Activated CD8-positive, alpha-beta T cell treated with anti-CD3 and anti-CD28 coated beads for 36 hours (primary cell): ENCODE measurements at regions of chr3 and their contacts with region 1.

Region 1: DNA sequence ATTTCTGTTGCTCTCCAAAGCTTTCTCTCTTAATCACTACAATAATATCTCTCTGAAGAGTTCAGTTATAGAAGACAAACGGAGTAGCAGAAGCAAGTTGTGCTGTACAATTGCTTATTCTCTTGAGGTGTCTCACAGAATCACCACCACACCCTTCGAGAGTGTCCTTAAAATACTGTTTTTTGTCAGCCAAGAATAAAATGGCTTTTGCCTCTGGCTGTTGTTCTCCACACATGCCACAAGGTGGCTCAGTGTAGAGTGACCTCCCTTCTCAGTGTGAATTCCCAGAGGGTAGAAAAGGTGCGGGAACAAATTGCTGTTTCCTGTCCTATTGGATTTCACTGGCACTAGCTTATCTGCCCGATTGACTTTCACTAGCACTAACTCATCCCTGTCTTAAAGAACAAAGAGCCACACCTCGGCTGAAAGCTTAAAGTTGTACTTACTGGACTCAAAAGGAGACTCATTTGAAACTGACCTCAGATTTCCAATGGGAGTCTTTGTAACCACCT is 134.2 kb upstream of the SATB1 start:
- DNase-seq: peak; percentile 32
- ATAC-seq: peak; percentile 37
- H3K4me3 Mint-ChIP-seq: peak overlapping the region; percentile 13
- H3K27ac Mint-ChIP-seq: peak overlapping the region; percentile 95
- H3K4me1 Mint-ChIP-seq: peaks cover 67% of the 10 kb centered on the region
- H3K27me3 Mint-ChIP-seq: no peaks in the 10 kb centered on the region
- CTCF ChIP-seq: peak; percentile 83

Region 2: DNA sequence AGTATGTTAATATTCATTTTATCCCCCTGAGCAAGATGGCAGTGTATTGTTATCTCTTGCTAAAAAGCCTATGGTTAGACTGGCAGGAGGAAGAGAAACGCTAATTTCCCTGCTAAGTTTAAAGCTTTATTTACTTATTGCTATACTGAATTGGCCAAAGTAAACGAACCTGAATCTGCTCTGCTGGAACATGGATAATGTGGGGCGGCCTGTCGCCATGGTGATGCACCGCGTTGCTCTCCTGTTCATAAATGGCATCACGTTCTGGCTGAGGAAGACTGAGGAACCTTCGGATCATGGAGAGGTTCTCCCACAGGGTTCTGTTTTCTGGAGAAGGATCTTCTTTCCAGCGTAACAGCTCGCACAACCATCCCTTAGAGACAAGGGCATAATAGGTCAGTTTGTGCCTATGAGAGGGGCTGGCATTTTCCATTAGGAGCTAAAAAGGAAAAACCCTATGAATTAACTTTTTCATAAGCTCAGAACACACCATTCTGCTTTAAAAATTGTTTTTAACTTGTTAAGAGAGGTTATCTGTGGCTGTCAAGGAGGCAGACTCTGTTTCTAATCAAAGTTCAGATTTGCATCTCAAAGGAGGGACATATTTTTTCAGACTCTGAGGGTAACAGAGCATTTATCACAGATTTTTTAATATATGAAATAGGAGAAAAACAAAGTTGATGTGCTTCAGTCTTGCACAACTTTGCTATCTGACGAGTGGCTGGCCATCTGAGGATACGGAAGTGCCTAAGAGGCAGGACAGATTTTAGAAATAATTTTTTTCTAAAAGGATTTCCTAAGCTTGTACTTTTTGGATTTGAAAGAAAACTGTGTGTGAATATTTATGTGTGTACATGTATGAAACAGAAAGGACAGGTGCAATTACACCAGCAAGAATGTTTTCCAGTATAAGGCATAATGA is 207.3 kb before region 1 on chr3:
- CTCF ChIA-PET with region 1: no interaction called
- POLR2A ChIA-PET with region 1: no interaction called
- intact Hi-C with region 1: no loop called
- DNase-seq: no peak
- ATAC-seq: no peak
- H3K4me3 Mint-ChIP-seq: no peak overlapping the region
- H3K27ac Mint-ChIP-seq: peak overlapping the region; percentile 11
- H3K4me1 Mint-ChIP-seq: peaks cover 57% of the 10 kb centered on the region
- H3K27me3 Mint-ChIP-seq: no peaks in the 10 kb centered on the region
- CTCF ChIP-seq: no peak

Region 3: DNA sequence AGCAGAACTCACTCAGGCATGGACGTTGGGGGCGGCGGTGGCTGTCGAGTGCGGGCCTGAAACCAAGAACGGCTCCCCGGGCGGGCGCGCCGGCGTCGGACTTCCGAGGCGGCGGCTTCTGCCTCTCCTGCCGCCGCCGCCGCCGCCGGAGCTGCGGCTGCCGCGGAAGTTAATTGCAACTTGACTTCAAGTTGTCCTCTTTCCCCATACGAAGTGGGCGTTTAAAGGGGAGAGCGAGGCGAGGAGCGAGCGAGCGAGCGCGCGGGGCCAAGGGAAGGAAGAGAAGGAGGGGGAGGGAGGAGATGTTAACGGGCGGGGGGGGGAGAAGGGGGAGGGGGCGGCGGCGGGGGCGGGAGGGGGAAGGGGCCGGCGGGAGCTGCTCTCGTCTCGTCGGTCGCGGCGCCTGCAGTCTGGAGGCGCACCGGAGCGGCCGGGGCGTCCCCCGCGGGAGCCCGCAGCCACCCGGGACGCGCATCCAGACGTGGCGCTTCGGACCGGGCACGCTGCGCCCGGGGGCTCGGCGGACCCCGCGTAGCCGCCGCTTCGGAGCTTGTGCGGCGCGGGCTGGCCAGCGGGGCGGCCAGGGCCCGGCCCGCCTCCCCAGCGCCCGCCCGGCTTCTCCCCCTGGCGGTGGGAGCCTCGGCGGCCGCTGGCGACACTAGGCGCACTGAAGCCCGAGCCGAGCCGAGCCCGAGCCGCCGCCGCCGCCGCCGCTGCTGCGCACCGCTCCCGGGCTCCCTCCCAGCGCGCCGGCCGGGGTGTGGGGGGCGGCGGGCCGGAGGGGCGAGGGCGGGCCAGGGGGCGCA is 114.6 kb before region 1 on chr3:
- CTCF ChIA-PET with region 1: interaction called, 10 read pairs
- POLR2A ChIA-PET with region 1: interaction called, 16 read pairs
- intact Hi-C with region 1: loop called (anchors 2 kb)
- DNase-seq: peak; percentile 83
- ATAC-seq: peak; percentile 75
- H3K4me3 Mint-ChIP-seq: peak overlapping the region; percentile 99
- H3K27ac Mint-ChIP-seq: peak overlapping the region; percentile 97
- H3K4me1 Mint-ChIP-seq: peaks cover 33% of the 10 kb centered on the region
- H3K27me3 Mint-ChIP-seq: no peaks in the 10 kb centered on the region
- CTCF ChIP-seq: no peak

Region 4: GRCh38 chr3:18649666-18650363 is 90.4 kb after region 1 on chr3:
- CTCF ChIA-PET with region 1: interaction called, 17 read pairs
- POLR2A ChIA-PET with region 1: interaction called, 12 read pairs
- intact Hi-C with region 1: loop called (anchors 5 kb)
- DNase-seq: peak; percentile 82
- ATAC-seq: peak; percentile 88
- H3K4me3 Mint-ChIP-seq: peak overlapping the region; percentile 6
- H3K27ac Mint-ChIP-seq: peak overlapping the region; percentile 94
- H3K4me1 Mint-ChIP-seq: peaks cover 72% of the 10 kb centered on the region
- H3K27me3 Mint-ChIP-seq: no peaks in the 10 kb centered on the region
- CTCF ChIP-seq: no peak

Region 5: GRCh38 chr3:18703798-18704197 is 144.4 kb after region 1 on chr3:
- CTCF ChIA-PET with region 1: interaction called, 10 read pairs
- POLR2A ChIA-PET with region 1: interaction called, 3 read pairs
- intact Hi-C with region 1: no loop called
- DNase-seq: no peak
- ATAC-seq: peak; percentile 84
- H3K4me3 Mint-ChIP-seq: no peak overlapping the region
- H3K27ac Mint-ChIP-seq: peak overlapping the region; percentile 43
- H3K4me1 Mint-ChIP-seq: peaks cover 17% of the 10 kb centered on the region
- H3K27me3 Mint-ChIP-seq: no peaks in the 10 kb centered on the region
- CTCF ChIP-seq: no peak

Region 6: GRCh38 chr3:18758047-18758704 is 198.8 kb after region 1 on chr3:
- CTCF ChIA-PET with region 1: interaction called, 12 read pairs
- POLR2A ChIA-PET with region 1: interaction called, 4 read pairs
- intact Hi-C with region 1: loop called (anchors 5 kb)
- DNase-seq: peak; percentile 41
- ATAC-seq: peak; percentile 96
- H3K4me3 Mint-ChIP-seq: no peak overlapping the region
- H3K27ac Mint-ChIP-seq: peak overlapping the region; percentile 79
- H3K4me1 Mint-ChIP-seq: peaks cover 43% of the 10 kb centered on the region
- H3K27me3 Mint-ChIP-seq: no peaks in the 10 kb centered on the region
- CTCF ChIP-seq: peak; percentile 83